GM13976 (cell line): ENCODE measurements at regions of chr2 and their contacts with region 1.

Region 1: GRCh38 chr2:171416009-171416926 is 17.5 kb downstream of the METTL8 start:
- DNase-seq: peak; percentile 66
- CTCF ChIP-seq: peak; percentile 74

Region 2: DNA sequence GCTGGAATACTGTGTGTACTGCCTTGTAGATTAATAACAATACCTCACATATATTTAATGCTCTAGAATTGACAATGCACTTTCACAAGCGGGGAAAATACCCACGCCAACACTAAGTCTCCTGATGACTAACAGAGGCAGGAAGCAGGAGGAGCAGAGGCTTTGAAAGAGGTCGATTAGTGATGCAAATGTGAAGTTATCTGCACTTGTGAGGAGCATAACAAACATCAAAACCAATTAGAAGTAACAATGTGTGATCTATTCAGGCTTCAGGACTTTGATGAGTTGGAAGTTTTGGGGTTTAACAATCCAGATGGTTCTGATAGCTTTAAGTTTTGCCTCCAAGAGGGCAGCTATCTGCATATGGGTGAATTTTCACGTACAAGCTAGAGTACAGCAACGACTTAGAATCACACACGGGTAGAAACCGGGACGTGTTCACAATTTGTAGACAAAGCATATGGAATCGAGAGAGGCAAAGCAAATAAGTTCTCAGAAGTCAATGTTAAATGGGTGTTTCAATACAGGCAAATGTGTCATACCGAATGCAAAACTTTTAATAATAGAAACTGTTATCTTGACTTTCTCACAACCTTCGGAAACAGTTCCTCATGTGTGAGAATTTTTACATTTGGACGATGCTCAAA is 97.0 kb before region 1 on chr2:
- in situ Hi-C with region 1: loop called (anchors 10 kb)
- DNase-seq: peak; percentile 42
- CTCF ChIP-seq: no peak

Region 3: GRCh38 chr2:171957061-171957460 is 540.8 kb after region 1 on chr2:
- in situ Hi-C with region 1: no loop called
- DNase-seq: no peak
- CTCF ChIP-seq: no peak

Region 4: DNA sequence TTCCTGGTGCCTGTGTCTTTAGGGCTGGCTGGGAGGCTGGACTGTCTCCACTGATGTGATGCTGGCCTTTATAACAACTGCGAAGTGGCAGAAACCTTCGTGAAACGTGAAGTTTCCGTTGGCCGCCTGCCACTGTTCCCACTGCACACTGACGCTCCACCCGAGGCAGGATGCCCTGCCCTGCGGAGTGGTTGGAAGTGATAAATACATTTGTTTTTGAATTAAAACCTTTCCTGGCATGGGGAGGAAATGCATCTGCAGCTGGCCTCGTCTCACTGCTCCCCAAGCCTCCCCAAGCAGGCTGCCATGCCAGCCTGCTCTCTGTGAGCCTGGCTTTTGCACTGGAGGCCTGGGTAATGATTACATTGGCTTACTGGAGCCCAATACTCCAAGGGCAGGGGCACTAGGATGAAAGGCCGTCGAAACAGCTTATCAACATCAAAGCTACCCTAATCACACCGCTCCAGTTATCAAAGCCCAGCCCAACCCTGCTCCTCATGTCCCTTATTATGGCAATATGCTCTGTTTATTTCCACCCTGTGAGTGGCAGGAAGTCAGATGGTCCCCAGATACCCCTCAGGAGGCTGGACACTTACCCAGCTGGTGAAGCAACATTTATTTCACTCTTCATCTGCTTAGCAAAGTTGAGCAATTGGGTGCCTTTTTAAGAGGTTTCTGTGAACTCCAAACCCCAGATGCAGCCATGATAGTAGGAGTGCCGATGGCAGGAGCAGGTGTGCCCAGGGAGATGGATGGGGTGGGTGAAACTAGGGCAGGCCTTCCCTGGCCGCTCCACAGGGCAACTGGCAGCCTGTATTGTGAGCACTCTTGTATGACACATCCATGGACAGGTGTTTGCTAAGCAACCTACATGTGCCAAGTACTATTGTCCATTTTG is 913.8 kb after region 1 on chr2:
- in situ Hi-C with region 1: no loop called
- DNase-seq: no peak
- CTCF ChIP-seq: no peak